ENCODE measurements at regions of chr17 and their contacts with region 1.

Region 1: DNA sequence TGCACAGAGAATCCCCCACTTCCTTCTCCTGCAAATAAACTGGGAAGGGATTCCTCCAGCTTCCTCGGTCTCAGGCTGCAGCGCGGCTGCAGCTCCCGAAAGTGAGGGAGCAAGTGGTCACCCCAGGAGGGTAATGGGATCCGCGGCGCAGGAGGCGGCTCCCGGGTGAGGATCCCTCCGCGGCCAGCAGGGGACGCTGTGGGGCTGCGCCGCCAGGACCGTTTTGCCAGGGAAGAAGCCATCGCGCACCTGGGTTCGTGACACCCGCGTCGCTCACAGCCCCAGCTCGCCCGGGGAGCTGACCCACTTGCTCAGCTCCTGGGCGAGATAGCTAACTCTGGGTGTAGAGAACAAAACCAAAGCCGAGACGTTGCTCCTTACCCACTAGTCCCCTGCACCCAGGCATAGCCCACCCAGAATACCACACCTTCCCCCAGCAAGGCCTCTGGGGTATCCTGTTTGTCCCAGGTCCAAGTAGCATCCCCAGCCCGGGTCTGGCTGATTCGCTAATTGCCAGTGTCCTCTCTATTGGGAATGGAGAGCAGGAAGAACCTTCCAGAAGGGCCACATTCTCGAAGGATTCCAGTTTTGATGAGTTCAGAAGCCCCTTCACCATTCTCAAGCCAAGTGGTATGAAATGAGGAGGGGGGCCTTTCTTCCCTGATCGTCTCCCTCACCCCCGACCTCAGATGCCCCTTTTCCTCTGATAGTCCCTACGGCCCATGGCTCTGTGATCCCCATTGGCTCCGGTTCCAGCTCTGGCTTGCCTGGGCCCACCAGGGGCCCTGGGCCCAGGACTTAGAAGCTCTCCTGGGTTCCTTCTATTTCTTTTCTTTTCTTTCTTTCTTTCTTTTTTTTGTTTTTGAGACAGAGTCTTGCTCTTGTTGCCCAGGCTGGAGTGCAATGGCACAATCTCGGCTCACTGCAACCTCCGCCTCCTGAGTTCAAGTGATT is 14.1 kb downstream of the CYGB start:
- DNase-seq: peak; percentile 58
- ATAC-seq: peak; percentile 97
- H3K4me3 ChIP-seq: peak overlapping the region; percentile 1 to 19; a peak in 3 of 4 replicates
- H3K27ac ChIP-seq: no peak overlapping the region
- H3K4me1 ChIP-seq: peaks cover 0 to 20% of the 10 kb centered on the region in 2 experiments; a peak in 3 of 4 replicates
- H3K27me3 ChIP-seq: no peaks in the 10 kb centered on the region
- CTCF ChIP-seq: peak; percentile 97 to 100 (median 100)
- POLR2A ChIP-seq: peak; percentile 28
- RAD21 ChIP-seq: peak; percentile 100

Region 2: GRCh38 chr17:76540381-76541300 is 17.3 kb after region 1 on chr17:
- CTCF ChIA-PET with region 1: interaction called, 22 read pairs
- POLR2A ChIA-PET with region 1: no interaction called
- RAD21 ChIA-PET with region 1: interaction called in 1 of 2 experiments, 4 read pairs
- intact Hi-C with region 1: no loop called
- DNase-seq: peak; percentile 93
- ATAC-seq: peak; percentile 99
- H3K4me3 ChIP-seq: peak overlapping the region; percentile 51 to 57
- H3K27ac ChIP-seq: peak overlapping the region; percentile 61
- H3K4me1 ChIP-seq: peaks cover 8 to 16% of the 10 kb centered on the region in 2 experiments
- H3K27me3 ChIP-seq: no peaks in the 10 kb centered on the region
- CTCF ChIP-seq: peak in 2 of 3 experiments; percentile 29 to 32; a peak in 3 of 6 replicates
- POLR2A ChIP-seq: peak; percentile 34
- RAD21 ChIP-seq: no peak

Region 3: DNA sequence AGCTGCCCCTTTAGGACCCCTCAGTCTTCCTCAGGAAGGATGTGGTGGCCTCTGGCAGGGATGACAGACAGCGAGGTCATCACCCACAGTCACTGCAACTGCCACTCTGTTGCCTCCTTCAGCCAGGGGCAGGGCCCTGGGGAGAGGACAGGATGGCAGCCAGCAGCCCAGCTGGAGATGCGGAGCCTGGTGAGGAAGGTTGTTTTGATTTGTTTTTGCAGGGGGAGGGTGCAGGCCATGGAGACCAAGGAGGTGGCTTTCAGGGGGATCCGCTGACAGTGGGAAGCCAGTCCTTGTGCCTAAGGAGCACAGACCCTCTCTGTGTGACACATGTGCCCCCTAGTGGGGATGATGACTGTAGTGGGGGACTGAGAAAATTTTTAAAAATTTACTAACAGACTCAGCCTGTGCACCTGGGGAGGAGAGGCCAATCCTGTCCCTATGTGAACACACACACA is 23.9 kb after region 1 on chr17:
- CTCF ChIA-PET with region 1: interaction called, 22 read pairs
- POLR2A ChIA-PET with region 1: interaction called, 5 read pairs
- RAD21 ChIA-PET with region 1: interaction called in 1 of 2 experiments, 3 read pairs
- intact Hi-C with region 1: loop called (anchors 1 kb)
- DNase-seq: no peak
- ATAC-seq: peak; percentile 96
- H3K4me3 ChIP-seq: no peak overlapping the region
- H3K27ac ChIP-seq: no peak overlapping the region
- H3K4me1 ChIP-seq: peaks cover 0 to 13% of the 10 kb centered on the region in 2 experiments; a peak in 2 of 4 replicates
- H3K27me3 ChIP-seq: no peaks in the 10 kb centered on the region
- CTCF ChIP-seq: peak; percentile 80 to 92 (median 90)
- POLR2A ChIP-seq: no peak
- RAD21 ChIP-seq: peak; percentile 92

Region 4: GRCh38 chr17:76681222-76682137 is 158.1 kb after region 1 on chr17:
- CTCF ChIA-PET with region 1: interaction called, 27 read pairs
- POLR2A ChIA-PET with region 1: interaction called, 4 read pairs
- RAD21 ChIA-PET with region 1: interaction called in 1 of 2 experiments, 5 read pairs
- intact Hi-C with region 1: loop called (anchors 1 kb)
- DNase-seq: peak; percentile 56
- ATAC-seq: peak; percentile 89
- H3K4me3 ChIP-seq: no peak overlapping the region
- H3K27ac ChIP-seq: no peak overlapping the region
- H3K4me1 ChIP-seq: no peaks in the 10 kb centered on the region
- H3K27me3 ChIP-seq: no peaks in the 10 kb centered on the region
- CTCF ChIP-seq: peak; percentile 90 to 99 (median 96)
- POLR2A ChIP-seq: no peak
- RAD21 ChIP-seq: peak; percentile 91

Region 5: GRCh38 chr17:76714822-76715495 is 191.6 kb after region 1 on chr17:
- CTCF ChIA-PET with region 1: interaction called, 14 read pairs
- POLR2A ChIA-PET with region 1: no interaction called
- RAD21 ChIA-PET with region 1: no interaction called
- intact Hi-C with region 1: loop called (anchors 1 kb)
- DNase-seq: no peak
- ATAC-seq: peak; percentile 28
- H3K4me3 ChIP-seq: no peak overlapping the region
- H3K27ac ChIP-seq: 0 out of 2 replicates have a peak overlapping the region, but pooled peaks have one; percentile 0
- H3K4me1 ChIP-seq: peaks cover 9 to 14% of the 10 kb centered on the region in 2 experiments
- H3K27me3 ChIP-seq: no peaks in the 10 kb centered on the region
- CTCF ChIP-seq: peak; percentile 87 to 97 (median 88)
- POLR2A ChIP-seq: no peak
- RAD21 ChIP-seq: peak; percentile 83